Transverse colon (tissue), 4 donors: ENCODE measurements at regions of chr2 and their contacts with region 1.

Region 1: GRCh38 chr2:235170536-235171521 is 219.0 kb downstream of the SH3BP4 start:
- DNase-seq: peak; percentile 35
- H3K4me3 ChIP-seq: no peak overlapping the region
- H3K27ac ChIP-seq: peak overlapping the region in 1 of 4 donors; percentile 22
- H3K4me1 ChIP-seq: peaks cover 0 to 22% (median 18%) of the 10 kb centered on the region in 4 donors
- H3K27me3 ChIP-seq: no peaks in the 10 kb centered on the region
- CTCF ChIP-seq: peak in 4 of 5 experiments; percentile 30 to 51 (median 42)
- EP300 ChIP-seq: no peak
- POLR2A ChIP-seq: no peak

Region 2: DNA sequence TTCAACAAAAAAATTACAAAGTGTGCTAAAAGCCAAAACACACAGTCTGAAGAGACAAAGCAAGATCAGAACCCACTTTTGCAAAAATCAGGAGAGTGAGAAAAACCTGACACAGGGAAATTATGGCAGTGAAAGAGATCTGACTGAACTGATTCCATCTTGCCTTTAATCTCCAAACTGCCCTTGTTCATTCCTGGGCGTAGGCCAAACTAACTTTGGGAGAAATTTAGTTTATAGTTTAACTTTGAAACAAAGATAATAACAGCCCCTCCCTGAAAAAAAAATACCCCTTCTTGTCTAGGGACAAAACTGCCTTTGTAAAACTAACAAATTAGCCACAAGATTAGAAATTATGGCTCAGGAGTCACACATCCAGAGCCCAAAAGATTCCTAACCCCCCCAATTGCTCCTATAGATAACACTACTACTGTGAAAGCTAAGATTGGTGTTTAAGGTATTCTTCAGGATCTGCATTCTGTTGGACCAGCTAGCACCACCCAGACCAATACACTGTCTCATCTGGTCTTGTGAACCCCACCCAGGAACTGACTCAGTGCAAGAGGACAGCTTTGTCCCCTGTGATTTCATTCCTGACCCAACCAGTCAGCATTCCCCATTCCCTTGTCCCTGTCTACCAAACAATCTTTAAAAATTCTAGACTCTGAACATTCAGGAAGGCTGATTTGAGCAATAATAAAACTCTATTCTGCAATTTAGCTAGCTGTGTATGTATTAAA is 445.1 kb before region 1 on chr2:
- in situ Hi-C with region 1: no loop called
- intact Hi-C with region 1: no loop called
- DNase-seq: peak; percentile 31
- H3K4me3 ChIP-seq: no peak overlapping the region
- H3K27ac ChIP-seq: peak overlapping the region in 3 of 4 donors; percentile 30 to 56 (median 33)
- H3K4me1 ChIP-seq: peaks cover 0 to 24% (median 12%) of the 10 kb centered on the region in 4 donors
- H3K27me3 ChIP-seq: no peaks in the 10 kb centered on the region
- CTCF ChIP-seq: no peak
- EP300 ChIP-seq: no peak
- POLR2A ChIP-seq: no peak

Region 3: DNA sequence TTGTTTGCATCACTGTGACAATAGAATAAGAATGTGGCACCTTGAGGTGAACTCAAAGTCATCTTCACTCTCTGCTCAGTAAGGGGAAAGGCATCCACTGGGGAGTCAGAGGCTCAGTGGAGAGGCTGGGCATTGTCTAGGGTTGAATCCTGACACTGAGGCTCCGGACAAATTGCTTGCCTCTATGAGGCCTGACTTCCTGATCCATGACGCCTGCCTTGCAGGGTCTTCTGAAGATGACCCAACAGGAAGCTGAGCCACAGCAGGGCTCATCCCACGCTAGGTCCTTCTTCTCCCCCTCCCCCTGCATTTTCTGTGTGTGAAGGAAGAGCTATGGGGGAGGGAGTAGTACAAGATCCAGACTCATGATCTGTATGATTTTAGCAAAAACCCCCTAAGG is 46.1 kb after region 1 on chr2:
- in situ Hi-C with region 1: no loop called
- intact Hi-C with region 1: loop called (anchors 1 kb)
- DNase-seq: no peak
- H3K4me3 ChIP-seq: no peak overlapping the region
- H3K27ac ChIP-seq: no peak overlapping the region
- H3K4me1 ChIP-seq: no peaks in the 10 kb centered on the region
- H3K27me3 ChIP-seq: no peaks in the 10 kb centered on the region
- CTCF ChIP-seq: no peak
- EP300 ChIP-seq: no peak
- POLR2A ChIP-seq: no peak

Region 4: GRCh38 chr2:235493775-235494715 is 323.2 kb after region 1 on chr2 and contains the start of gene AGAP1:
- in situ Hi-C with region 1: no loop called
- intact Hi-C with region 1: no loop called
- DNase-seq: peak; percentile 91
- H3K4me3 ChIP-seq: peak within 1 kb of the TSS; percentile 71 to 81 (median 76)
- H3K27ac ChIP-seq: peak within 1 kb of the TSS; percentile 84 to 90 (median 89)
- H3K4me1 ChIP-seq: peaks cover 5 to 33% (median 28%) of the 10 kb centered on the region in 4 donors
- H3K27me3 ChIP-seq: no peaks in the 10 kb centered on the region
- CTCF ChIP-seq: no peak
- EP300 ChIP-seq: no peak
- POLR2A ChIP-seq: no peak
- total RNA-seq, gene AGAP1: 56.1 to 96.9 (median 71.2) TPM